ENCODE measurements at regions of chr14 and their contacts with region 1.

Region 1: DNA sequence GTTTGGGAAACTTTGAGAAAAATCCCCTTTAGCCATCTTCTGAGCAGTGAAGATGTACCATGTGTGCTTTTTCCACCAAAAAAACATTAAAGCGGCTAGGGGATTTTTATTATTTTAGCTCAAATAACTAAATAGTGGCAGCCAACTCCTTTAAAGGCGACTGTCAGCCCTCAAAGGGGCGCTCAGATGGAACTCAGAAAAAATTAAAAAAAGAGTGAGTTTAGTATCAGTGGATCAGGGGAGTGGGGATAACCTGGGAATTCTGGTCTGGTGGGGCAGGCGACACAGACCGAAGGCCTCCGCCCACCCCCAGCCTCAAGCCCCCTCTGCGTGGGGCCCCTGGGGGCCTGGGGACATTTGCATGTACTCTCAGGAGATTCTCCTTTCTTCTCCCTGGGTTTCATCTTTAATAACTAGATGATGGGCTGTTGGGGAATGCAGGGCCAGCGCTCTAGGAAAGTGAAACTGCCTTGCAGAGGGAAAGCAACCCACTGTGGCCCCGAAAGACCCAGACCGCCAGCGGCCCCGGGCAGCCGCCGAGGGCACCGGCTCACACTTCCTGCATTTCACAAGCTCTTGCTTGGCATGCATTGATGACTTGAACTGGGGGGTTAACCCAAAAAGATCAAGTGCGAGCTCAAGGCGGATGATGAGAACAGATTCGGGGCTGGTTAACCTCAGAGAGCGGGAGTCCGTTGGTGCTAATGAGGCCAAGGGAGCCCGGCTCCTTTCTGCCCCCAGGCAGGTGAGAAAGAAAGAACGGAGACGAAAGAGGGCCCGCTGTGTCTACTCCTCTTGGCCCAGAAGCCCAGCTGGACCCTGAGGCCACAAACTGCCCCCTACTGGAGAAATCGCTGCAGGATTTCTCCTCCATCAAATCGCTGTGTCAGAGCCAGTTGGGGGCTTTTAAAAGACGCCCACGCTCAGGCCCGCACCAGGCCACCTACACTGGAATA is 7.3 kb upstream of the BATF start:
- DNase-seq: peak; percentile 60
- CTCF ChIP-seq: no peak

Region 2: DNA sequence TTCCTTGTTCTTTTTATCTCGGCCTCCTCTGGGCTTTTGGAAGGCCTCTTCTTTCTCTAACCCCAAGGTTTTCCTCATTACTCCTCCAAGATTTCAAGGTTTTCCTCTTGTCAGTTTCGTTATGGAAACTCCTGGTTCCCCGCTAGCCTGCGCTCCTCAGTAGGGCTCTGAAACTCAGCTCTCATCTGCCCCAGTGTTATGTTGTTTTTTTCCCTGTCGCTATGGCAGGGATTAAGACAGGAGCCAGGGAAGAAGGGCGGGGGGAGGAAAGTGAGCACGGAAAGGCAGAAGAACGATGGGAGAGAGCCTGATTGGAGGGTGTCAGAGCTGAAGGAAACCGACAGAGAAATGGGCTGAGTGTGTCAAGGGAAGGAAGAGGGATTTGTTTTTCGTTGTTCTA is 113.6 kb before region 1 on chr14:
- CTCF ChIA-PET with region 1: no interaction called
- POLR2A ChIA-PET with region 1: no interaction called
- DNase-seq: no peak
- CTCF ChIP-seq: no peak

Region 3: GRCh38 chr14:75497191-75497590 is 17.8 kb before region 1 on chr14:
- CTCF ChIA-PET with region 1: interaction called, 97 read pairs
- POLR2A ChIA-PET with region 1: interaction called, 4 read pairs
- DNase-seq: peak; percentile 65
- CTCF ChIP-seq: peak; percentile 14

Region 4: DNA sequence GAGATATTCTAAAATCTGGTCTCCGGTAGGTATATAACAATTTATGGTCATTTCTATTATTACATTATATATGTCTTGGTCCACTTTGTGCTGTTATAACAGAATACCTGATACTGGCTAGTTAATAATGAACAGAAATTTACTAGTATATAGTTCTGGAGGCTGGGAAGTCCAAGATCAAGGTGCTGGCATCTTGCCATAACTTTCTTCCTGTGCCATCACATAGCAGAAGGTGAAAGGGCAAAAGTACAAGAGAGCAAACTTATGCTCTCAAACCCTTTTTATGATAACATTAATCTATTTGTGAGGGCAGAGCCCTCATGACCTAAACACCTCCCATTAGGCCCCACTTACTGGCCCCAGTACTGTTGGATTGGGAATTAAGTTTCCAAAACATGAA is 10.5 kb before region 1 on chr14:
- CTCF ChIA-PET with region 1: interaction called, 97 read pairs
- POLR2A ChIA-PET with region 1: no interaction called
- DNase-seq: no peak
- CTCF ChIP-seq: no peak

Region 5: GRCh38 chr14:75531660-75532317 is 16.8 kb after region 1 on chr14:
- CTCF ChIA-PET with region 1: interaction called, 63 read pairs
- POLR2A ChIA-PET with region 1: interaction called, 4 read pairs
- DNase-seq: no peak
- CTCF ChIP-seq: no peak

Region 6: DNA sequence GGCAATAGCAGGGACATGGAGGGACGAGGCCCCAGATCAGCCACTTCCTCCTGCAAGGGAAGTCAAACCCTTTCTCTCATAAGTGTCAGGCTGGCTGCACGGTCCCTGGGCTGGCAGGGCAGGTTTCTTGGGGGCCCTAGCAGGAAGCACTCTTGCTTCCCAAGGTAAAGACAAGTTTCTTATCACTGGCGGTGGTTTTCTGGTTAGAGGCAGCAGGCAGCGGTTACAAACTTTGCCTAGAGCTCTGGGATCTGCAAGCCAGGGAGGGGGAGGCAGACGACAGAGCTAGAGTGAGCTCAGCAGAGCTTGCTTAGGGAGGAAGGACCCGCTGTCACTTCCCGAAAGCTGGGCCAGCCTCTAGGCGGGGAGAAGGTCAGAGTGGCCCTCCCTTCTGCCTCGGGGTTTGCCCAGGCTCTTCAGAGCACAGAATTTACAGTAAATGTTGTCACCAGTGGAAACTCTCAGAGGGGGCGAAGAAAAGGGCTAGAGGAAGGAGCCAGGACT is 27.7 kb after region 1 on chr14:
- CTCF ChIA-PET with region 1: interaction called, 23 read pairs
- POLR2A ChIA-PET with region 1: interaction called, 3 read pairs
- DNase-seq: peak; percentile 82
- CTCF ChIP-seq: no peak

Measured in GM10248 (cell line).